CD8-positive, alpha-beta T cell (primary cell): ENCODE measurements at regions of chr20 and their contacts with region 1.

Region 1: GRCh38 chr20:59087829-59088433 is 45.3 kb upstream of the PRELID3B start:
- DNase-seq: peak; percentile 73 to 94 (median 84)
- ATAC-seq: peak; percentile 87
- H3K4me3 ChIP-seq: no peak overlapping the region
- H3K4me3 Mint-ChIP-seq: no peak overlapping the region
- H3K27ac ChIP-seq: no peak overlapping the region
- H3K27ac Mint-ChIP-seq: no peak overlapping the region
- H3K4me1 ChIP-seq: peaks cover 4% of the 10 kb centered on the region
- H3K4me1 Mint-ChIP-seq: peaks cover 11% of the 10 kb centered on the region
- H3K27me3 ChIP-seq: no peaks in the 10 kb centered on the region
- H3K27me3 Mint-ChIP-seq: no peaks in the 10 kb centered on the region
- CTCF ChIP-seq: peak; percentile 88

Region 2: GRCh38 chr20:59102841-59103299 is 14.9 kb after region 1 on chr20:
- CTCF ChIA-PET with region 1: interaction called, 23 read pairs
- POLR2A ChIA-PET with region 1: interaction called, 7 read pairs
- intact Hi-C with region 1: loop called in 1 of 2 experiments (anchors 2 kb)
- DNase-seq: peak in 1 of 9 experiments; percentile 12
- ATAC-seq: peak; percentile 20
- H3K4me3 ChIP-seq: no peak overlapping the region
- H3K4me3 Mint-ChIP-seq: no peak overlapping the region
- H3K27ac ChIP-seq: no peak overlapping the region
- H3K27ac Mint-ChIP-seq: no peak overlapping the region
- H3K4me1 ChIP-seq: peaks cover 9% of the 10 kb centered on the region
- H3K4me1 Mint-ChIP-seq: peaks cover 15% of the 10 kb centered on the region
- H3K27me3 ChIP-seq: peaks cover 0 to 2% of the 10 kb centered on the region in 2 experiments
- H3K27me3 Mint-ChIP-seq: no peaks in the 10 kb centered on the region
- CTCF ChIP-seq: no peak

Region 3: DNA sequence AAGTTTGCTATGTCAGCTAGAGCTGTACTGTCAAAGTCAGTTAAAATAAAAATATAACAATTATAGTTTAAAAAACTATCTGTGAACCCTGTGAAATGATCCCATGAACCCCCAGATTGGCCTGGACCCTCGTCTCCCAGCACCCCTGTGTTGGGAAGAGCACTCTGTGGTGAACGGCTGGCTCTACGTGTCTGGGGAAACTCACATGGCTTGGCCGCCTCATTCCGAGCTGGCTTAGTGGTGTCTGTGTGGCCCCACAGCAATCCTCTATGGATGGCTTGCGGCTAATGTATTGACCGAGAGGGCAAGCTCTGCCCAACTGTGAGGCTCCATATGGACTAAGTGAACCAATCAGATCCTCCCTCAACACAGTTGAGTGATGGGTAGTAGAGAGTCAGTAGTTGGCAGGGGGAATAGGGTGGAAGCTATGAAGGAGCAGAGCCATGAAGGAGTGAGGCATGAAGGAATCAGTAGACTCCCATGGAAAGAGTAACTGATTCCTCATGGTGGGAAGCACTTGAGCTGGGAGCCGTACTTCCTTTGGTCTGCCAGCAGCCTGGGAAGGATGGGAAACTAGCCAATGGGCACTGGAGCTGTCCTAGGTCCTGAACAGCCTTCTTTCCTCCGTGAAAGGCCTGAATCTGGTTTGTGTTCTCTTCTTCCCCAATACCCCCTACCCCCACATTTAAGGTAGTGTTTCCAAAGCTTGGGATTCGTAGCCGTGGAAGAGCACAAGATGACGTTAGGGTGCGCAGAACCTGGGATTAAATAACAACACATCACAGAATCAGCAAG is 54.1 kb after region 1 on chr20:
- CTCF ChIA-PET with region 1: interaction called, 14 read pairs
- POLR2A ChIA-PET with region 1: interaction called, 4 read pairs
- intact Hi-C with region 1: no loop called
- DNase-seq: peak in 1 of 9 experiments; percentile 30
- ATAC-seq: no peak
- H3K4me3 ChIP-seq: no peak overlapping the region
- H3K4me3 Mint-ChIP-seq: no peak overlapping the region
- H3K27ac ChIP-seq: no peak overlapping the region
- H3K27ac Mint-ChIP-seq: no peak overlapping the region
- H3K4me1 ChIP-seq: peaks cover 44% of the 10 kb centered on the region
- H3K4me1 Mint-ChIP-seq: peaks cover 57% of the 10 kb centered on the region
- H3K27me3 ChIP-seq: no peaks in the 10 kb centered on the region
- H3K27me3 Mint-ChIP-seq: no peaks in the 10 kb centered on the region
- CTCF ChIP-seq: no peak

Region 4: DNA sequence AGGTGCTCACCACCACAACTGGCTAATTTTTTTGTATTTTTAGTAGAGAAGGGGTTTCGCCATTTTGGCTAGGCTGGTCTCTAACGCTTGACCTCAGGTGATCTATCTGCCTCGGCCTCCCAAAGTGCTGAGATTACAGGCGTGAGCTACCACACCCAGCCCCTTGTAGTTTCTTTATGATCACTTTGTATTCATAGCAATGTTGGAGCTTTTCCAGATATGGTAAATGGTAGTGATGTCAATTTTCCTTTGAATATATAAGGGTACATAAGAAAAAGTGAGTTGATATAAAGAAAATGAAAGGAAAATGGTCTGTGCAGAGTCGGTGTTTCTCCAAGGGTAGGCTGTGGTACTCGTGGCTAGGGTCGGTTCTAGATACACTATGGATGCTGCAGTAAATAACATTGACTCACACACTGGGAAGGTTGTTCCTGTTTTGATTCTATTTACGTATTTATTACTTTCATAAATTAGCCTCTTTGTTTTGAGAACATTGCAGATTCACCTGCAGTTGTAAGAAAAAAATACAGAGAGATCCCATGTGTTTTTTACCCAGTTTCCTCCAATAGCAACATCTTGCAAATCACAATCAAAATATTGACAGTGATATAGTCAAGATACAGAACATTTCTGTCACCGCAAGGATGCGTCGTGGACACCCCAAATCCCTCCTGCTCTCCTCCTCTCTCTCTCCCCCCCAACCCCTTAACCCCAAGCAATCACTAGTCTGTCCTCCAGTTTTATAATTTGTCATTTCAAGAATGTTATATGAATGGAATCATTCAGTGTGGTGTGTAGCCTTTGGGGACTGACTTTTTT is 78.2 kb after region 1 on chr20:
- CTCF ChIA-PET with region 1: interaction called, 13 read pairs
- POLR2A ChIA-PET with region 1: interaction called, 3 read pairs
- intact Hi-C with region 1: loop called in 1 of 2 experiments (anchors 2 kb)
- DNase-seq: peak in 4 of 9 experiments; percentile 20 to 79 (median 60)
- ATAC-seq: peak; percentile 64
- H3K4me3 ChIP-seq: peak overlapping the region; percentile 59 to 62
- H3K4me3 Mint-ChIP-seq: peak overlapping the region; percentile 84
- H3K27ac ChIP-seq: peak overlapping the region; percentile 93 to 95
- H3K27ac Mint-ChIP-seq: peak overlapping the region; percentile 93
- H3K4me1 ChIP-seq: peaks cover 85% of the 10 kb centered on the region
- H3K4me1 Mint-ChIP-seq: peaks cover 93% of the 10 kb centered on the region
- H3K27me3 ChIP-seq: no peaks in the 10 kb centered on the region
- H3K27me3 Mint-ChIP-seq: no peaks in the 10 kb centered on the region
- CTCF ChIP-seq: no peak

Region 5: DNA sequence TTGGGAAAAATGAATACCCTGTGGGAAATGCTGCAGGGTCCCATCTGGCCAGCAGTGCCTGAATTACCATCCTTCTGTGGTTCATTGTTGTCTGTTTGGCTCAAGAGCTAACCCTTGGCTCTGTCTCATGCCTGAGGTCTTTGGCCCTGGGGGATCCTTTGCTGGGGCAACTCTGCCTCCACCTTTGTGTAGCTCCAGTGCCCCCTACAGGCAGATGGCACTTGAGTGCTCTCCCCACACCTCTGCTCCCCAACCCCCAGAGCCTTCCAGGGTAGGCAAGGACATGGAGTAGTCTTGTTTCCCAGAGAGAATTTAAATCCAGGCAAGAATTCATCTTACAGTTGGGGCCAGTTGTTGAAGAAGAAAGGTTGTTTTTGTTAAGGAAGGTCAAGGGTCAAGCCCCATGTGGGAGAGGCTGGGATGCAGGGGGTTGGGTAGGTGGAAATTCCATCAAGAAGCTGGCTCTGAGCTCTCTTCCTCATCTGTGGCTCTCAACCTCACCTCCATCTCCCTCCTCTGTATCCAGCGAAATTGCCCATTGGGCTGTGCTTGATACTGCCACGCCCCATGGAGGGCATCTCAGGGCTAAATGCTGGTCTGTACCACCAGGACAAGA is 119.9 kb after region 1 on chr20:
- CTCF ChIA-PET with region 1: interaction called, 204 read pairs
- POLR2A ChIA-PET with region 1: interaction called, 9 read pairs
- intact Hi-C with region 1: loop called (anchors 1 kb)
- DNase-seq: peak; percentile 66 to 90 (median 86)
- ATAC-seq: peak; percentile 96
- H3K4me3 ChIP-seq: no peak overlapping the region
- H3K4me3 Mint-ChIP-seq: no peak overlapping the region
- H3K27ac ChIP-seq: no peak overlapping the region
- H3K27ac Mint-ChIP-seq: peak overlapping the region; percentile 76
- H3K4me1 ChIP-seq: peaks cover 25% of the 10 kb centered on the region
- H3K4me1 Mint-ChIP-seq: peaks cover 37% of the 10 kb centered on the region
- H3K27me3 ChIP-seq: no peaks in the 10 kb centered on the region
- H3K27me3 Mint-ChIP-seq: no peaks in the 10 kb centered on the region
- CTCF ChIP-seq: peak; percentile 93

Region 6: DNA sequence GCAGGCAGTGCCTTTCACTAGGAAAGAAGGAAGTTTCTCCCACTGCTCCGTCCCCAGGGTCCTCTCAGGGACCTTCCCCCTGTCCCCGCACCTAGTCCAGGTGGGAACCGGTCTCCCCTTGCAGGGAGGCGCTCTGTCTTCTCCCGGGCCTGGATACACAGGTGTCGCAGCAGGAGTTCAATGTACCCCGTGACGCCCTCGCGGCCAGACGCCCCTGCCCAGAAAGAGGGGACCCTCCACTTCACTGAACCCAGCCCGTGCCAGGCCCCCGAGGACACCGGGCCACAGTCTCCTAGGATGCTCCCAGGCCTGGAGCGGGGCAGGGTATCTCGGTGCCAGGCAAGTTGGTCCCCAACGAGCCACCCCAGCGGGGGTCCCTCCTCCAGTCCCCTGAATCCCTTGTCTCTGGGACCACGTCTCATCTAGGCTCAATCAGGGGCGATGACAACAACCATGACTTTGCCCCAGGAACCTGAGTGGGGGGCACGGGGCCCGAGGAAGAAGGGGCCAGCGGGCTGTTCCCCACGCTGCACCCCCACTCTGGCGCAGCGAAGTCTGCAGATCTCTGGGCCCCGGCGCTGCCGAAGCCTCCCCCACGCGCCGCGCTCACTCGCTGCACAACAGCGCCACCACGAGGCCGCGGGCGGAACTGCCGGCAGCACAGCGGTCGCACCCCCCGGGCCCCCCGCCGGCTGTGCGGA is 315.5 kb after region 1 on chr20:
- CTCF ChIA-PET with region 1: interaction called, 54 read pairs
- POLR2A ChIA-PET with region 1: no interaction called
- intact Hi-C with region 1: loop called (anchors 1 kb)
- DNase-seq: peak; percentile 57 to 91 (median 73)
- ATAC-seq: peak; percentile 84
- H3K4me3 ChIP-seq: peak overlapping the region; percentile 10 to 47
- H3K4me3 Mint-ChIP-seq: no peak overlapping the region
- H3K27ac ChIP-seq: peak overlapping the region in 1 of 2 experiments; percentile 21
- H3K27ac Mint-ChIP-seq: peak overlapping the region; percentile 81
- H3K4me1 ChIP-seq: peaks cover 38% of the 10 kb centered on the region
- H3K4me1 Mint-ChIP-seq: peaks cover 4% of the 10 kb centered on the region
- H3K27me3 ChIP-seq: peaks cover 7 to 13% of the 10 kb centered on the region in 2 experiments
- H3K27me3 Mint-ChIP-seq: peaks cover 8% of the 10 kb centered on the region
- CTCF ChIP-seq: peak; percentile 99